AG04449 (cell line): ENCODE measurements at regions of chr14 and their contacts with region 1.

Region 1: GRCh38 chr14:34098045-34098984 is 147.4 kb upstream of the EGLN3 start:
- DNase-seq: no peak
- H3K4me3 ChIP-seq: no peak overlapping the region
- CTCF ChIP-seq: peak; percentile 40

Region 2: DNA sequence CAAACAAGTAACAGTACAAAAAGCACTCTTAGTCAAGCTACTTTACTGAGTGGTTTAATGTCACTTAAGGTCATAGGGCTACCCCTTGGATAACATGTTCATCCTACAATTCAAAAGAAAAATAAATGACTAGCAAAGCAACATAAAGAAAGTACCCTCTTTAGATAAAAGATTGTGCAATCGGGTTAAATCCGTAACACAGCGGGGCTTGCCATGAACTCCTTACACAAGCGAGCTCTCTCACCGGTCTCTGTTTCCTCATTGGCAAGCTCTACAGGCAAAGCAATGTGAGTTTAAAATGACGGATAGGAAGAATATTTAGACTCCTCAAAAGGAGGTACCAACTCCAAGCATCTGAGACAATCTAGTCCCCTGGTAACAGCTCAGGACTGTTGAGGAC is 288.0 kb before region 1 on chr14:
- CTCF ChIA-PET with region 1: no interaction called
- POLR2A ChIA-PET with region 1: no interaction called
- DNase-seq: no peak
- H3K4me3 ChIP-seq: no peak overlapping the region
- CTCF ChIP-seq: no peak

Region 3: GRCh38 chr14:33839193-33840076 is 258.9 kb before region 1 on chr14:
- CTCF ChIA-PET with region 1: interaction called, 150 read pairs
- POLR2A ChIA-PET with region 1: no interaction called
- DNase-seq: no peak
- H3K4me3 ChIP-seq: no peak overlapping the region
- CTCF ChIP-seq: peak; percentile 70

Region 4: GRCh38 chr14:33848706-33849454 is 249.4 kb before region 1 on chr14:
- CTCF ChIA-PET with region 1: interaction called, 150 read pairs
- POLR2A ChIA-PET with region 1: no interaction called
- DNase-seq: no peak
- H3K4me3 ChIP-seq: no peak overlapping the region
- CTCF ChIP-seq: peak; percentile 58

Region 5: DNA sequence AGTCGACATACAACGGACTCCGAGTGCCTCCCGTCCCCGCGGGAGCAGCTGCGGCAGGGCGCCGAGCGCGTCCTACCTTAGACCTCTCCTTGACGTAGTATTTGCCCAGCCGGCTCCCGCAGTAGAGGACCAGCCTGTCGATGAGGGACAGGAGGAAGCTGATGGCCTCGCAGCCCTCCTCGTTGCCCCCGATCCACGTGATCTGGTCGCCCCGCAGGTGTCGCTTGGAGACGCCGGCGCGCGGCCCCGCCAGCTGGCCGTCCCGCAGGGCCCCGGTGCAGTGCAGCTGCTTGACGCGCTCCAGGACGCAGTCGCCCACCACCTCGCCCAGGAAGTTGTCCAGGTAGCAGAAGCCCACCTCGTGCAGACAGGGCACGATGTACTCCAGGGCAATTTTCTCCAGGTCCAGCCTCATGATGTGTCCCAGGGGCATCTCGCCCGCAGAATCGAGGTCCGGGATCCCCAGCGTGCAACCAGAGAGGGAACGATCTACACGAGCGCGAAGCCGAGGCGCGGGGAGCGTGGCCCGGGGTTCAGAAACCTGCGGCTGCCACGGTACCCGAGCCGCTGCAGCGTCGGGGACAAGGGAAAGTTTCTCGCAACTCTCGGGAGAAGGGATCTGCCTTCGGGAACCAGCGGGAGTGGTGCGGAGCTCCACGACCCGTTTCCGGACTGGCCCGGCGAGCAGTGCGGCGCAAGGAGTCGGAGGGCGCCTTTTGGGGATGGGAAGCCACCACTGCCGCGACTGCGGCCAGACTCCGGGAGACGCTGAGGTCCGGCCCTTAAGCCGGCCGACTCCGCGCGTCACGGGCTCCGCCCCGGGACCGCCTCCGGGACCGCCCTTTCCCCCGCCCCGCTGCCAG is 147.8 kb before region 1 on chr14 and contains the start of gene EGLN3:
- CTCF ChIA-PET with region 1: no interaction called
- POLR2A ChIA-PET with region 1: no interaction called
- DNase-seq: no peak
- H3K4me3 ChIP-seq: peak within 1 kb of the TSS; percentile 64
- CTCF ChIP-seq: no peak

Region 6: DNA sequence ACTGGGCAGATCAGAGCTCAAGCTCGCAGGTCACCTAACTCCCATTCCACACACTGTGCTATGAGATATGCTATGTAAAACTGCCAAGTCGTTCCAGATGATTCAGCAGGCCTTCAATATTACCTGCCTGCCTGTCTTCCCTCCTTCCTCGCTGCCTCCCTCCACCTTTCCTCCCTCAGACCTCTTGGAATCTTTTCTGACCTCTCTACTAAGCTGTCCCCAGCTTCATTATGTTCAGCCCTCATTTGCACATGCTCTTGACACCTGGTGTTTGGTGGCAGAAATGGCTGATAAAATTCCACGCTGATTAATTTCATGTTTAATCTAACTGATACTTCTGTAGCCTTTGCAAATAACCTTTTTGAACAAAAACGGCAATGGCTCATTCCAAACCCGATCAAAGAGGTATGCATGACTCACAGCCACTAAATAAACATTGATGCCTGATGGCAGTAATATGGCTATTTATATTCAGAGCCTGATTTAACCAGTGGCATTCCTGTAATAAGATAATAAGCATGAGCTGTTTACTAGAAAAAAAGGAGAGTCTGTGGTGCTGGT is 16.7 kb before region 1 on chr14:
- CTCF ChIA-PET with region 1: interaction called, 13 read pairs
- POLR2A ChIA-PET with region 1: no interaction called
- DNase-seq: no peak
- H3K4me3 ChIP-seq: no peak overlapping the region
- CTCF ChIP-seq: no peak

Region 7: GRCh38 chr14:34128665-34129064 is 30.4 kb after region 1 on chr14:
- CTCF ChIA-PET with region 1: no interaction called
- POLR2A ChIA-PET with region 1: no interaction called
- DNase-seq: no peak
- H3K4me3 ChIP-seq: no peak overlapping the region
- CTCF ChIP-seq: no peak